Common myeloid progenitor, CD34-positive (primary cell): ENCODE measurements at regions of chr16 and their contacts with region 1.

Region 1: GRCh38 chr16:14501331-14502255 is 128.5 kb downstream of the PARN start:
- DNase-seq: peak; percentile 62 to 86 (median 81)
- H3K4me3 ChIP-seq: no peak overlapping the region
- H3K27ac ChIP-seq: no peak overlapping the region
- H3K4me1 ChIP-seq: peaks cover 0 to 18% (median 11%) of the 10 kb centered on the region in 4 experiments
- H3K27me3 ChIP-seq: no peaks in the 10 kb centered on the region

Region 2: DNA sequence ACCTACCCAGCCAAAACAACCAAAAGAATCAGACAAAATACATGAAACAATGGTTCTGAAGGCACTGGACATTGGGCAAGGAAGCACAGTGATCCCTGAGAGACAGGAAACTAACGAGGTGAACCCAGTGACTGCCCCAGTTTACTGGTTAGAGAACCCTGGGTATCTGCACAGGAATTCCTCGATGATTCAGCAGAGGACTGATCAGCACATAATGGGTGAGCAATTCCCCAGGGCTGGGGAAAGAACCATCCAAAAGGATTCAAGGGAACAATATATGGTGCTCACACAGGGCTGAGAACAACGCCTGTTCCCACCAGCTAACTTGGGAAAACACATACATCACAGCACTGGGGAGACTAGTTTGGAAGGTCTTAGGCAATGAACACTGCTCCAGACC is 38.8 kb before region 1 on chr16:
- CTCF ChIA-PET with region 1: no interaction called
- POLR2A ChIA-PET with region 1: no interaction called
- DNase-seq: no peak
- H3K4me3 ChIP-seq: no peak overlapping the region
- H3K27ac ChIP-seq: no peak overlapping the region
- H3K4me1 ChIP-seq: no peaks in the 10 kb centered on the region
- H3K27me3 ChIP-seq: no peaks in the 10 kb centered on the region

Region 3: DNA sequence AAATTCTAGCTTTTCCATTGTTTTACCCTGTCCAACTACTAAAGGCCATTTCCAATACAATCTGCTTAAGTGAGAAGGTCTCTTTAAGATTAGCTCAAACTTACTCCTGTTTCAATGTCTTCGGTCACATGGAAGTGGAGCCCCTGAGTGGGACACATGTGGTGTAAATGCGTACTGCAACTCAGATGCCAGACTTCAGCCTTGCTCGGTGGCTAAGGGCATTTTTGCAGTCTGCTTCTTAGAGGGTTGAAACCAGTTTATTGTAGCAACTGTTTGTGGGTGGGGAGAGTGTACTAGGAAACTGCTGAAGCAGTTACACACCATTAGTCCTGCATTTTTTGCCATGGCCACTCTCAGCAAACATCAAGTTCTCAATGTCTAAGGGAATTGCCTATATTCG is 12.1 kb before region 1 on chr16:
- CTCF ChIA-PET with region 1: interaction called, 11 read pairs
- POLR2A ChIA-PET with region 1: no interaction called
- DNase-seq: peak; percentile 37 to 79 (median 70)
- H3K4me3 ChIP-seq: no peak overlapping the region
- H3K27ac ChIP-seq: no peak overlapping the region
- H3K4me1 ChIP-seq: peaks cover 5 to 35% (median 28%) of the 10 kb centered on the region in 4 experiments
- H3K27me3 ChIP-seq: no peaks in the 10 kb centered on the region

Region 4: DNA sequence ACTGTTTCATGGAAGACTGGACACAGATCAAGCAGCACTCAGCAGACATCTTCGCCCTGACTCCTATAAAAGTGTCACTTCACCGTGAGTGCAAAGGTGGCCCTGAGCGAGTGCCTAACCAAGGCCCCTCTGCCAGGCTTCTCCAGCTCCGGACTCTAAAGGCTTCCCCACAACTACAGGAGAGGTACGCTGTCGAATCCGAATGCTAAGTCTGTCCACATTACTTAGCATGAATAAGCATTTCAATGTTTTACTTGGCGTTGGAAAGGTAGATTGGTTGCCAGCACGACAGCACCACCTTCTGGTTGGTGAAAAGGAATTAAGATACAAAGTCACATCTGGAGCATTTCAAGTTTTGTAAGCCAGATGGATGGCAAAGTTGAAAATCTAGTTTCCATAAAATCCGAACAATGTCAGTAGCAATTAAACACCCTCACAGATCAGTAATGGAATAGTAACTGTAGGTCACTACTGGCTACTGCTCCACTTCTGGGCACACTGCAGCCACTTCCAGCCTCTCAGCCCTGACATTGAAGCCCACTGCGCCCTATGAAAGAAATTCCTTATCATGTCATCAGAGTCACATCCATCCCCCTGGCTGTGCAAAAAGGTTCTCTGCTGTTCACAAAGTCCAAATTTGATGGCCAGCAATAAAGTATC is 27.5 kb after region 1 on chr16:
- CTCF ChIA-PET with region 1: interaction called, 11 read pairs
- POLR2A ChIA-PET with region 1: no interaction called
- DNase-seq: peak; percentile 85 to 94 (median 91)
- H3K4me3 ChIP-seq: peak overlapping the region in 1 of 7 experiments; percentile 55
- H3K27ac ChIP-seq: no peak overlapping the region
- H3K4me1 ChIP-seq: peaks cover 0 to 6% (median 3%) of the 10 kb centered on the region in 4 experiments
- H3K27me3 ChIP-seq: no peaks in the 10 kb centered on the region

Region 5: DNA sequence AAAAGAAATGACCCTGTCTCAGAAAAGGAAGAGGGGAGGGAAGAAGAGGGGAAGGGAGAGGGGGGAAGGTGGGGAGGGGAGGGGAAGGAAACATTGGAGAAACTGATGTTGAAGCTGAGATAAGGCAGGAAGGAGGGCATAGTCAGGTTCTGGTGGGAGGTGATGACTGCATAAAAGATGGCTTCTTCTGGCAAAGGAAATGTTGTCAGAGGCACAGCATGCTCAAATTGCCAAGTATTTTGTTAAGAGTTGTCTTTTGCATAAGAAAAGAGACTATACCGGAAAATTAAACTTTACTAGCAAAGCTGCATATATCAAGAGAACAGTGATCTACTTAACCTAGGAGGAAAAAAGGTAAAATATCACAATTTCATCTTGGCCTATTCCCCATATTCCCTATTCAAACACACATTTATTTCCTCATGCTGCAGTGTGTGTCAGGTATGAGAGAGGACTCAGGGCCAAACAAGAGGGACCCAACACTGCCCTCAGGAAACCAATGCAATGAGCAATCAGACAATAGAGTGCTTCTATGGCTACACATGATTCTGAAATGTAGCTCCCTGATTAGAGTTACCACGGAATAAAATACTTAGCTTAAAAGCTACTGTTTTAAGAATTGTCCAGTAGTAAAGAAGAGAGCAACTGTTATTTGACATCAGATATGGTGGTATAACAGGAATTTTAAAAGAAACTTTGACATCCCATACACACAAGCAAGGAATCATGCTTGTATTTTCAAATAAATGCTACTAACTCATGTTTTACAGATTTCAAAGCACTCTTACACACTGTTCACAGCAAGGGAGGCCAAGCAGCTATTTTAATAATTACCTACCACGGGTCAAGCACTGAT is 47.6 kb after region 1 on chr16:
- CTCF ChIA-PET with region 1: no interaction called
- POLR2A ChIA-PET with region 1: no interaction called
- DNase-seq: no peak
- H3K4me3 ChIP-seq: no peak overlapping the region
- H3K27ac ChIP-seq: no peak overlapping the region
- H3K4me1 ChIP-seq: peaks cover 0 to 2% (median 0%) of the 10 kb centered on the region in 4 experiments
- H3K27me3 ChIP-seq: no peaks in the 10 kb centered on the region

Region 6: DNA sequence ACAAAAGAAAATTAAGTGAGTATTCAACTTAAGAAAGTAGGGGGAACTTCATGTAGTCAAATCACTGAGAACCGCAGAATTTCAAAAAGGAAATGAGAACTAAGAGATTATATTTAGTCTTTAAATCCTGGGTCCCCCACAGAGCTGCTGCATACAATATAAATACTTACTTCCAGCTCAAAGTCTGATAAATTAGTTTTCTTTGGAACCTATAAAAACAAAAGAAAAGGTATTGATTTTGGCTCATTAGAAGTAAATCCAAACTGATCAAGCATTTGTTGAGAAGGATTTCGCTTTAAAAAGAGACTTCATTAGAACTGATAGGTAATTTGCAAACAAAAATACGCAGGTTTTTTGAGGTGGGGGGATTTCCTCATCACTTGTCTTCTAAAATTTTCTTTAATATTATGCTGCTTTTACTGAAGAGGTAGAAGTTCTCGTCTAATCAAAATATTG is 106.5 kb after region 1 on chr16:
- CTCF ChIA-PET with region 1: no interaction called
- POLR2A ChIA-PET with region 1: no interaction called
- DNase-seq: no peak
- H3K4me3 ChIP-seq: no peak overlapping the region
- H3K27ac ChIP-seq: no peak overlapping the region
- H3K4me1 ChIP-seq: no peaks in the 10 kb centered on the region
- H3K27me3 ChIP-seq: no peaks in the 10 kb centered on the region